PC-3 (cell line): ENCODE measurements at regions of chr21 and their contacts with region 1.

Region 1: GRCh38 chr21:44785620-44786335 is 15.8 kb downstream of the UBE2G2 start:
- DNase-seq: peak; percentile 39
- ATAC-seq: peak; percentile 79
- H3K4me3 ChIP-seq: no peak overlapping the region
- H3K27ac ChIP-seq: peak overlapping the region; percentile 10; the same call in 1 of the 2 replicates
- H3K4me1 ChIP-seq: peaks cover 9% of the 10 kb centered on the region; the same call in 1 of the 2 replicates
- H3K27me3 ChIP-seq: no peaks in the 10 kb centered on the region
- CTCF ChIP-seq: no peak

Region 2: GRCh38 chr21:44709426-44710293 is 76.1 kb before region 1 on chr21:
- CTCF ChIA-PET with region 1: no interaction called
- POLR2A ChIA-PET with region 1: no interaction called
- intact Hi-C with region 1: loop called (anchors 5 kb)
- DNase-seq: peak; percentile 62
- ATAC-seq: peak; percentile 58
- H3K4me3 ChIP-seq: peak overlapping the region; percentile 29; the same call in 1 of the 2 replicates
- H3K27ac ChIP-seq: no peak overlapping the region
- H3K4me1 ChIP-seq: peaks cover 12% of the 10 kb centered on the region; the same call in 1 of the 2 replicates
- H3K27me3 ChIP-seq: peaks cover 11% of the 10 kb centered on the region; the same call in 1 of the 2 replicates
- CTCF ChIP-seq: no peak

Region 3: DNA sequence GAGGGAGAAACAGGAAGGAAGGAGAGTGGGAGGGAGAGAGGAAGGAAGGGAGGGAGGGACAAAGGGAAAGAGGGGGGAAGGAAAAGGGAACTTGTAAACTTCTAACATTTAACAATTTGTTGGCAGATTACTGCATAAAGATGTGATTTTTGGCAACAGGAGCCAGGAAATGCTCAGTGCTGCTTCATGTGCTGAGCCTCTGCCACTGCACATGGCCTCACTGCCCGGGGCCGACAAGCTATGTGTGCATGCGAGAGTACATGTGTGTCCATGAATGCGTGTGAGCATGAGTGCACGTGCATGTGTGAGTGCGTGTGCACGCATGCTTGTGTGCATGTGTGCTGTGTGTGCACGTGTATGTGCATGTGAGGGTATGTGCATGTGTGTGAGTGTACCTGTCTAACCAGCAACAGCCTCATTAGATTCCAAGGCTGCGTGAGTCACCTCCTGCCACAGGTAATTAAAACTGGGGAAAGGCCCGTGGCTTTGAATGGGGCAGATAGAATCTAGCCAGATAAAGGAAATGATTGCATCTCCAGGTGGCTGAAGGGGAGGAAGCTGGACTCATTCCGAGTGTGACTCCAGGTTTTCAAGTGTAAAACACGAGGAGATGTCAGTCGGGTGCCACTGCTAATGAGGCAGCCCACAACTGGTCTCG is 33.0 kb before region 1 on chr21:
- CTCF ChIA-PET with region 1: no interaction called
- POLR2A ChIA-PET with region 1: no interaction called
- intact Hi-C with region 1: loop called (anchors 1 kb)
- DNase-seq: peak; percentile 98
- ATAC-seq: peak; percentile 93
- H3K4me3 ChIP-seq: peak overlapping the region; percentile 3; the same call in 1 of the 2 replicates
- H3K27ac ChIP-seq: peak overlapping the region; percentile 78
- H3K4me1 ChIP-seq: peaks cover 41% of the 10 kb centered on the region
- H3K27me3 ChIP-seq: no peaks in the 10 kb centered on the region
- CTCF ChIP-seq: peak; percentile 37

Region 4: DNA sequence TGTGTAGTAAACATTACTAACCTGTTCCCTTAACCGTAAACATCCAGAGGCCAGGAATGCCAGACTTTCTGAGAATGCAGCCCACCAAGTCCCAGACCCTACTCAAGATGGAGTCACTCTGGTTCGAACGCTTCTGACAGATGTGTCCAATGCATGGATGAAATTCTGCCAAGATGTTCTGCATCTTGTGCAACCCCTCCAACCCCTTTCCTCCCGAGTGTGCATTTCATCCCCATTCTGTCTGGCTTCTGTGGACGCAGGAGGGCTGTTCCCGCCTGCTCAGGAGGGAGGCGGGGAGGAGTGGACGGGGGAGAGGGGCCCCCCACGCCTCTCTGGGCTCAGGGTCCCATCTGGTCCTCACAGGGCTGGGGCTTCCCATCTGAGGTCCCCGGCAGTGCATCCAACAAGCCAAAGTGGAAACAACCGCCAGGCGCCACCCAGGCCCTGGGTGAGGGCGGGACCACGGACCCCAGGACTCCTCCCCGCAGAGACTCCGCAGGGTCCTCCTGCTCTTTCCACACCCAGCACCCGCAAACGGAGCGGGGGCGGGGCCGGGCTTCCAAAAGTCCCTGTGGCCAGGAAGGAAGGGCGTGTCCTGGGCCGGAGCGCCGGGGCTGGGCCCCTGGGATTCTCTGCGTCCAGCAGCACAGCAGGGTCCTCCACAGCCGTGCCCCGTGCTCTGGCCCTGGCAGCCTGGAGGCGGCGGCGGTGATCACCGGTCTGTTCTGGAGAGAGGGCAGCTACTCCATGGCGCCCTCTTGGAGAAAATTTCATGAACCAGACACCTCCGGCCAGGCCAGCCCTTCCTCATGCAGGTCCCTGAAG is 59.8 kb after region 1 on chr21:
- CTCF ChIA-PET with region 1: no interaction called
- POLR2A ChIA-PET with region 1: no interaction called
- intact Hi-C with region 1: no loop called
- DNase-seq: peak; percentile 66
- ATAC-seq: peak; percentile 74
- H3K4me3 ChIP-seq: peak overlapping the region; percentile 36
- H3K27ac ChIP-seq: no peak overlapping the region
- H3K4me1 ChIP-seq: peaks cover 11% of the 10 kb centered on the region
- H3K27me3 ChIP-seq: no peaks in the 10 kb centered on the region
- CTCF ChIP-seq: peak; percentile 68

Region 5: DNA sequence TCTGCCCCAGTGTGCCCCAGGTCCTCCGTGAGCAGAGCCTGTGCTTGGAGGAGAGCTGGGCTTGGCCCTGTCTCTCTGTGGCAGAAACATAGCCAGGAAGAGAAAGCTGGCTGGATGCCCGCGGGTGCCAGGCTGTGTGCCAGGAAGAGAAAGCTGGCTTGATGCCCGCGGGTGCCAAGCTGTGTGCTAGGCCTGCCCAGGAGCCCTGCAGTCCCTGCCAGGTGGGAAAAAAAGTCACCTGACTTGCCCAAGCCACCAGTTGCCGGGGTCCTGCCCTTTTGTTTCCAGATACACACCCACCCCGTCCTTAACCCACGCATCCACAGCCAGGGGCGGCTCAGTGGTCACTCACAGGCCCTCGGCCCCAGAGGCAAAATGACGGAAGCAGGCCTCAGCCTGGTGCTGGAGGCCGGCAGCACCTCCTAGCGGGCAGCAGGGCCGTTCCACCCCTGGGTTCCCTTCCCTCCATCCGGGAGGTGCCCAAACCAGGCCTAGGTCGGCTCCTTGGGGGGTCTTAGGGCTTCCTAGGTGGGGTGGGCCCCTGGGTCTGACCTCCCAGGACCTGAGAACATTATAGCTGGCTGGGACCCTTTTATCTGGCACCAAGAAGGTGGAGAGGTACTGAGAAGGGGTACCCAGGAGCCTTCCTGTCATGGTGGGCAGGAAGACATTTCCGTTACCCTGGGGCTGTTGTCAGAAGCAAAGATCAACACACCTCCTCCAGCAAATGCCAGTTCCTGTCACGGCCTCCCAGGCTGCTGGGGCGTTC is 125.8 kb after region 1 on chr21:
- CTCF ChIA-PET with region 1: no interaction called
- POLR2A ChIA-PET with region 1: no interaction called
- intact Hi-C with region 1: no loop called
- DNase-seq: peak; percentile 92
- ATAC-seq: peak; percentile 72
- H3K4me3 ChIP-seq: no peak overlapping the region
- H3K27ac ChIP-seq: peak overlapping the region; percentile 76
- H3K4me1 ChIP-seq: peaks cover 64% of the 10 kb centered on the region
- H3K27me3 ChIP-seq: no peaks in the 10 kb centered on the region
- CTCF ChIP-seq: peak; percentile 93